ENCODE measurements at regions of chr4 and their contacts with region 1.

Region 1: GRCh38 chr4:102430461-102430910 is 70.7 kb upstream of the NFKB1 start:
- DNase-seq: peak; percentile 50
- H3K4me3 ChIP-seq: peak overlapping the region; percentile 49 to 97 (median 97)
- H3K27ac ChIP-seq: peak overlapping the region; percentile 84
- H3K4me1 ChIP-seq: peaks cover 4% of the 10 kb centered on the region
- H3K27me3 ChIP-seq: no peaks in the 10 kb centered on the region
- CTCF ChIP-seq: no peak
- POLR2A ChIP-seq: no peak

Region 2: GRCh38 chr4:101933906-101934305 is 496.6 kb before region 1 on chr4:
- CTCF ChIA-PET with region 1: no interaction called
- POLR2A ChIA-PET with region 1: no interaction called
- dilution Hi-C with region 1: no loop called
- intact Hi-C with region 1: no loop called
- DNase-seq: no peak
- H3K4me3 ChIP-seq: no peak overlapping the region
- H3K27ac ChIP-seq: no peak overlapping the region
- H3K4me1 ChIP-seq: no peaks in the 10 kb centered on the region
- H3K27me3 ChIP-seq: no peaks in the 10 kb centered on the region
- CTCF ChIP-seq: no peak
- POLR2A ChIP-seq: no peak

Region 3: GRCh38 chr4:102268355-102268754 is 162.1 kb before region 1 on chr4:
- CTCF ChIA-PET with region 1: no interaction called
- POLR2A ChIA-PET with region 1: no interaction called
- dilution Hi-C with region 1: no loop called
- intact Hi-C with region 1: no loop called
- DNase-seq: no peak
- H3K4me3 ChIP-seq: no peak overlapping the region
- H3K27ac ChIP-seq: no peak overlapping the region
- H3K4me1 ChIP-seq: no peaks in the 10 kb centered on the region
- H3K27me3 ChIP-seq: no peaks in the 10 kb centered on the region
- CTCF ChIP-seq: no peak
- POLR2A ChIP-seq: no peak

Region 4: GRCh38 chr4:102344954-102345794 is 85.3 kb before region 1 on chr4 and contains the start of gene SLC39A8:
- CTCF ChIA-PET with region 1: interaction called, 14 read pairs
- POLR2A ChIA-PET with region 1: no interaction called
- dilution Hi-C with region 1: no loop called
- intact Hi-C with region 1: loop called (anchors 1 kb)
- DNase-seq: peak; percentile 79
- H3K4me3 ChIP-seq: peak within 1 kb of the TSS; percentile 39 to 90 (median 89)
- H3K27ac ChIP-seq: no peak within 1 kb of the TSS
- H3K4me1 ChIP-seq: peaks cover 19% of the 10 kb centered on the region
- H3K27me3 ChIP-seq: peaks cover 2 to 5% of the 10 kb centered on the region in 2 experiments
- CTCF ChIP-seq: peak; percentile 67 to 84
- POLR2A ChIP-seq: peak; percentile 42
- total RNA-seq, gene SLC39A8: 6.0 and 6.7 TPM in 2 replicates

Region 5: GRCh38 chr4:102610007-102610406 is 179.5 kb after region 1 on chr4:
- CTCF ChIA-PET with region 1: interaction called, 9 read pairs
- POLR2A ChIA-PET with region 1: no interaction called
- dilution Hi-C with region 1: no loop called
- intact Hi-C with region 1: loop called (anchors 5 kb)
- DNase-seq: peak; percentile 18
- H3K4me3 ChIP-seq: no peak overlapping the region
- H3K27ac ChIP-seq: no peak overlapping the region
- H3K4me1 ChIP-seq: peaks cover 25% of the 10 kb centered on the region
- H3K27me3 ChIP-seq: no peaks in the 10 kb centered on the region
- CTCF ChIP-seq: peak; percentile 18 to 25
- POLR2A ChIP-seq: no peak

Region 6: DNA sequence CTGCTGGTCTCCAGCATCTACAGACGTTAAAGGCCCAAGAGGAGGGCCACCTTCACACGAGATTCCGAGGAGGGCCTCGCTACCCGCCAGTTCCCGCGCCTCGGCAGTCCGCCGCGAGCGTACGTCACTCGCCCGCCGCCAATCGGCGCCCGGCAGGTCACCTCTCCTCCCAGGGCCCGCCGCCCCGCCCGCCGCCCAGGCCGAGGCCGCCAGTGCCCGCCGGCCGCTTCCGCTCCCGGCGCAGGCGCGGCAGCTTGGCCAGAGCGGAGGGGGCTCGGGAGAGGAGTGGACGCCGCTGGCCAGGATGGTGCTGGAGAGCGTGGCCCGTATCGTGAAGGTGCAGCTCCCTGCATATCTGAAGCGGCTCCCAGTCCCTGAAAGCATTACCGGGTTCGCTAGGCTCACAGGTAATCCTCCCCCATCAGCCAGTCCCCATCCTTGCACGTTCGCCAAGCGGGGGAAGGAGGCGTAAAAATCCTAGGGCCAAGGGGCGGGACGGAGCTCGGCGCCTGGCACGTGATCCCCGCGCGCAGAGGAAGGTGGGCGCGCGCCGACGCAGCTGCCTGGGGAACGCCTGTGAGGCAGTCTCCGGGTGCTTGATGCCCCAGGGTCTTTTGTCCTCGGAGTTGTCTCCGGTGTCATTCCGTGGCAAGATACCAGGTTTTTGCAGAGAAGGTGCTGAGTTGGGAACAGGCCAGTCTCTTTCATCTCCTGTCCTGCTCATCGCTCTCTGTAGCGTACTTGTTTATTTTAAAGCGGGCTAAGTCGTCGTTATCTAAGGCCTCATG is 438.5 kb after region 1 on chr4 and contains the start of gene CISD2:
- CTCF ChIA-PET with region 1: no interaction called
- POLR2A ChIA-PET with region 1: no interaction called
- dilution Hi-C with region 1: no loop called
- intact Hi-C with region 1: loop called (anchors 2 kb)
- DNase-seq: peak; percentile 94
- H3K4me3 ChIP-seq: peak within 1 kb of the TSS; percentile 43 to 88 (median 78)
- H3K27ac ChIP-seq: peak within 1 kb of the TSS; percentile 76
- H3K4me1 ChIP-seq: peaks cover 25% of the 10 kb centered on the region
- H3K27me3 ChIP-seq: no peaks in the 10 kb centered on the region
- CTCF ChIP-seq: no peak
- POLR2A ChIP-seq: peak; percentile 91
- total RNA-seq, gene CISD2: 26.5 and 28.4 TPM in 2 replicates

Region 7: DNA sequence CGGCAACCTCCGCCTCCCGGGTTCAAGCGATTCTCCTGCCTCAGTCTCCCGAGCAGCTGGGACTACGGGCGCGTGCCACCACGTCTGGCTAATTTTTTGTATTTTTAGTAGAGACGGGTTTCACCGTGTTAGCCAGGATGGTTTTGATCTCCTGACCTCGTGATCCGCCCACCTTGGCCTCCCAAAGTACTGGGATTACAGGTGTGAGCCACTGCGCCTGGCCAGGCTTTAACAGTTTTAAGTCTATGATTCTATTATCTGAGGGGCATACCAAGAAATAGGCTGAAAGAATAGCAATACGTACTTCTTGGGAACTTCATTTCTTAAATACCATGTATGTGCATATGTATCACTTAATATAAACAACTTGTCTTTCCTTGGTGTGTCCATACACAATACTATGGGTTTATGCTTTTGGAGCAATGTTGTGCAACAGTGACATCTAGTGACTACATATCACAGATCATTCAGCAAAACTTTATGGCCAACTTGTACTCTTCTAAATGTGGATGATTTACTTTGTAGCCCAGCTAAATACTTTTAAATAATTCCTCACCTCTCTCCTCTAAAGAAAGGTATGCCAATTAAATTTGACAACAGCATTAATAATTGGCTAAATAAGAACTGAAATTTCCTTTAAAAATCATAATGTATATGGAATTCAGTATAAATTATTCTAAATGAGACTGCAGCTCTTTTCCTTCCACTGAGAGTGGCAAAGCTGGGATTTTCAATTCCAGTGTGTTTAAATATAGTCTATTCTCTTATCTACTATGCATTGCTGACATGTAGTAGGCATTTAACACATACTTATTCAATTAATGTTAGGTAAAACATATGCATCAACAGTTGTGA is 578.6 kb after region 1 on chr4:
- CTCF ChIA-PET with region 1: interaction called, 16 read pairs
- POLR2A ChIA-PET with region 1: no interaction called
- dilution Hi-C with region 1: no loop called
- intact Hi-C with region 1: loop called (anchors 1 kb)
- DNase-seq: peak; percentile 76
- H3K4me3 ChIP-seq: no peak overlapping the region
- H3K27ac ChIP-seq: no peak overlapping the region
- H3K4me1 ChIP-seq: no peaks in the 10 kb centered on the region
- H3K27me3 ChIP-seq: peaks cover 2% of the 10 kb centered on the region in 2 experiments
- CTCF ChIP-seq: peak; percentile 49 to 51
- POLR2A ChIP-seq: no peak

Region 8: DNA sequence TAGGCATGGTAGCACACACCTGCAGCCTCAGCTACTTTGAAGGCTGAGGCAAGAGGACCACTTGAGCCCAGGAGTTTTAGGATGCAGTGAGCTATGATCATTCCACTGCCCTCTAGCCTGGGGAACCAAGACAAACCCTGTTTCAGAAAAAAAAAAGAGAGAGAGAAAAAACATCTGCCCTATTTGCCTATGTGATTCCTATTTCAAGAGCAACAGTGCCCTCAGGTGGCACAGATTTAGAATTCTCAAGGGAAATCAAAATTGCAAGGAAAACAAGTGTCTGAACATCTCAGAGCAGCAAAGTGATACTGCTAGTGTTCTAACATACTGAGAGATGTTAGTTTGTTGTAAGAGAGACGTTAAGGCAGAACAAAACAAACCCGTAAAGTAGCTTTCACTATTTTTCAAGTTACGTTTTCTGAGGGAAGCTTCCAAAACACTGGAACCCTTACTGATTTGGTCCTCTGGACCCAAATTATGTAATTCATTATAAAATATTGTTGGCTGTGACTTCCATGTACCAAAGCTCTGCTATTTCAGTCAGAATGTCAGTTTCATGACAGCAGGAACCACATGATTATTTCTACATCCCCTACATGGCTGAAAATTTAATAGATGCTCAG is 661.2 kb after region 1 on chr4:
- CTCF ChIA-PET with region 1: interaction called, 6 read pairs
- POLR2A ChIA-PET with region 1: no interaction called
- dilution Hi-C with region 1: no loop called
- intact Hi-C with region 1: loop called (anchors 1 kb)
- DNase-seq: peak; percentile 66
- H3K4me3 ChIP-seq: no peak overlapping the region
- H3K27ac ChIP-seq: no peak overlapping the region
- H3K4me1 ChIP-seq: no peaks in the 10 kb centered on the region
- H3K27me3 ChIP-seq: no peaks in the 10 kb centered on the region
- CTCF ChIP-seq: peak; percentile 49 to 56
- POLR2A ChIP-seq: no peak

Measured in endothelial cell of umbilical vein (primary cell).